AG04450 (cell line): ENCODE measurements at regions of chr12 and their contacts with region 1.

Region 1: GRCh38 chr12:50187084-50187900 is 20.1 kb upstream of the CERS5 start:
- DNase-seq: peak; percentile 83
- H3K4me3 ChIP-seq: no peak overlapping the region
- H3K27ac ChIP-seq: peak overlapping the region; percentile 98
- H3K27me3 ChIP-seq: no peaks in the 10 kb centered on the region
- CTCF ChIP-seq: no peak

Region 2: DNA sequence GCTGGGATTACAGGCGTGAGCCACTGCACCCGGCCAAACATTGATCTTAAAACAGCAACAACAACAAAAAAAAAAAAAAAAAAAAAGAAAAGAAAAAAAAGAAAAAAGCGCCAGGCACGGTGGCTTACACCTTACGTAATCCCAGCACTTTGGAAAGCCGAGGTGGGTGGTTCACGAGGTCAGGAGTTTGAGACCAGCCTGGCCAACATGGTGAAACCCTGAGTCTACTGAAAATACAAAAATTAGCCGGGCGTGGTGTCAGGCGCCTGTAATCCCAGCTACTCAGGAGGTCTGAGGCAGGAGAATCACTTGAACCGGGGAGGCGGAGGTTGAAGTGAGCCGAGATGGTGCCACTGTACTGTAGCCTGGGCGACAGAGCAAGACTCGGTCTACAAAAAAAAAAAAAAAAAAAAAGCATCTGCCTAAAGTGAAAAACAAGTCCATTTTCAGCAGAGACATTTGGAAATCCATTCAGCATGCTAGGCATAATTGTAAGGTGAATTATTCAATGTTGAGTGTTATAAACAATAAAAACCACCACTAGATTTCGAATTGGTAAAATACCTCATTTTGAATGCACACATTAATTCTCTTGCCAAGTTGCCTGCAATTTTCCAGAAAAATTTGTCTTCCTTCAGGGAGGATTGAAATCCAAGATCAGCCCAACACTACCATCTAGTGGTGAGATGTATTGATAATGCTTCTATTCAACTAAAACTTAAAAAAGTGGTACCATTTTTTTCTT is 12.1 kb before region 1 on chr12:
- CTCF ChIA-PET with region 1: interaction called, 22 read pairs
- POLR2A ChIA-PET with region 1: interaction called, 3 read pairs
- DNase-seq: peak; percentile 67
- H3K4me3 ChIP-seq: no peak overlapping the region
- H3K27ac ChIP-seq: no peak overlapping the region
- H3K27me3 ChIP-seq: no peaks in the 10 kb centered on the region
- CTCF ChIP-seq: peak; percentile 62